Endothelial cell of umbilical vein (primary cell): ENCODE measurements at regions of chr1 and their contacts with region 1.

Region 1: GRCh38 chr1:2227346-2228153 is 569 bp upstream of the SKI start:
- DNase-seq: peak; percentile 92
- H3K4me3 ChIP-seq: peak overlapping the region in 2 of 3 experiments; percentile 63 to 95
- H3K27ac ChIP-seq: peak overlapping the region; percentile 98
- H3K4me1 ChIP-seq: peaks cover 20% of the 10 kb centered on the region
- H3K27me3 ChIP-seq: no peaks in the 10 kb centered on the region
- CTCF ChIP-seq: no peak
- POLR2A ChIP-seq: peak; percentile 16

Region 2: DNA sequence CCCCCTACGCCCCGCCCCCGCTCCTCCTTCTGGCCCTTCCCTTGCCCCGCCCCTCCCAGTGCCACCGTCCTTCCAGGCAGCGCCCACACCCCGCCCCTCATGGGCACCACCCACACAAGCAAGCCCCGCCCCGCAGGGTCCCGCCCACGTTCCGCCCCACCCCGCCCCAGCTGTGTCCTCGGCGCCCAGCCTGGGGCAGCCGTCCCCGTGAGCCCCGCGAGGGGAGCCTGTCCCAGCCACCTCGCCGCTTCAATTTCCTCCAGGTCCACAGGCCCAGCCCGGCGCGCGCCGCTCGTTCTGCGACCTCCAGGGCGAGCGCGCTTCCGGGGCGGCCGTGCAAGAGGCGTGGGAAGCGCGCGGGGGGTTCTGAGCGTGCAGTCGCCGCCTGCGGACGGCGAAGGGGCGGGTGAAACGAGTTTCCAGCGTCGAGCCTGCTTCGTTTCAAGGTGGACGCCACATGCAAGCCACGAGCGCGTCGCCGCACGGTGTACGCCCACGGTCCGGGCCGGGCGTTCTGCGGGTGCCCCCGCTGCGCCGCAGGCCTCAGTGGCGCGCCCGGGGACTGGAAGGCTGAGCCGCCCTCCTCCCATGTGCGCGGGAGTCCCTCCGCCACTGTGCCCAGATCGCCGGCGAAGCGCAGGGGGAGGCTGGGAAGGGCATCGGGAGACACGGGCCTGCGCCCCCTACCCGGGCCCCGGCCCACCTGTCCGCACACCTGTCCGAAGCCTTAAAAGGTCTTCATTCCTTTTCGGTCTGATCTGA is 22.2 kb before region 1 on chr1:
- CTCF ChIA-PET with region 1: interaction called, 6 read pairs
- POLR2A ChIA-PET with region 1: interaction called, 17 read pairs
- dilution Hi-C with region 1: no loop called
- intact Hi-C with region 1: loop called (anchors 2 kb)
- DNase-seq: peak; percentile 86
- H3K4me3 ChIP-seq: peak overlapping the region in 2 of 3 experiments; percentile 26 to 45
- H3K27ac ChIP-seq: peak overlapping the region; percentile 24
- H3K4me1 ChIP-seq: peaks cover 29% of the 10 kb centered on the region
- H3K27me3 ChIP-seq: no peaks in the 10 kb centered on the region
- CTCF ChIP-seq: no peak
- POLR2A ChIP-seq: no peak

Region 3: DNA sequence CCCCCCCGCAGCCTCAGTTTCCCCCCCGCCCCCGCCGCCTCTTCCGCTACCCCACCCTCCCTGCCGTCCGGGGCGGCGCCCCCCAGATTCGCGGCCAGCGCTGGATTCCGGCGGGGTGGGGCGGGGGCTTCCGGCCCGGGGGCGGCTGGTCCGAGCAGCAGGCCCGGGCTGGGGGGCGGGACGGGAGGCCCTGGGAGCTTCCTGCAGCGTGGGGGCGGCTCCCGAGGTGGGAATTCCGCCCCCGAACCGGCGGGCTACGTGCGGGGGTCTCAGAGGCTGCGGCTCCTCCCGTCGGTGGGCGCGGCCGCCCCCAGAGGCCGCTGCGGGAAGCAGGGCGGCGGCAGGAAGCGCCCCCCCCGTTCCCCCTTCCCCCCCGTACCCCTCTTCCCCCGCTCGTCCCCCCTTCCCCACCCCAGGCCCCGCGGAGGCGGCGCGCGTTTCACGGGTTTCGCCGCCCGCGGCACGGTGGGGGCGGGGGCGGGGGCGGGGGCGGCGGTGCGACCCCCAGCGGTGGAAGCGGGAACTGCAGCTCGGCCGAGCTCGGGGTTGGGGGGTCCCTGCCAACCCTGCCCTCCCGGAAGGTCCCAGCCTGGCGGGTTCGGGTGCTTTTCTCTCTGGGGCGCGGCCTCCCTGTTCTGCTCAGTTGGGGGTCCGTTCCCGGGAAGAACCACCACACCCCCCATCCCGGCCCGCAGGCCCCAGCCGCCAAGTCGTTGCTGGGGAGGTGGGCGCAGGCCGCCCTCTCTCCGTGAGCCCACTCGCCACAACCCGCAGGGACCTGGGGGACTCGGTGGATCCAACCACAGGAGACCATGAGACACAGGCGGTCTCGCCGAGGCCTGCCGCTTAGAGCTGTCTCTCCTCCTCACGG is 87.5 kb after region 1 on chr1:
- CTCF ChIA-PET with region 1: interaction called, 51 read pairs
- POLR2A ChIA-PET with region 1: interaction called, 6 read pairs
- dilution Hi-C with region 1: no loop called
- intact Hi-C with region 1: loop called (anchors 1 kb)
- DNase-seq: peak; percentile 29
- H3K4me3 ChIP-seq: peak overlapping the region in 1 of 3 experiments; percentile 54
- H3K27ac ChIP-seq: no peak overlapping the region
- H3K4me1 ChIP-seq: peaks cover 7% of the 10 kb centered on the region
- H3K27me3 ChIP-seq: no peaks in the 10 kb centered on the region
- CTCF ChIP-seq: peak; percentile 44 to 72
- POLR2A ChIP-seq: no peak